ENCODE measurements at regions of chr15 and their contacts with region 1.

Region 1: GRCh38 chr15:41416742-41417406 is at the start of gene RTF1:
- DNase-seq: peak; percentile 88 to 99 (median 95)
- ATAC-seq: peak; percentile 95 to 98 (median 97)
- H3K4me3 ChIP-seq: peak within 1 kb of the TSS; percentile 91 to 96
- H3K4me3 Mint-ChIP-seq: peak within 1 kb of the TSS; percentile 94 to 96 (median 95)
- H3K27ac ChIP-seq: peak within 1 kb of the TSS; percentile 74
- H3K27ac Mint-ChIP-seq: peak within 1 kb of the TSS; percentile 91 to 97
- H3K4me1 ChIP-seq: peaks cover 13 to 32% of the 10 kb centered on the region in 2 experiments
- H3K4me1 Mint-ChIP-seq: peaks cover 40 to 45% (median 44%) of the 10 kb centered on the region in 3 donors
- H3K27me3 ChIP-seq: no peaks in the 10 kb centered on the region
- H3K27me3 Mint-ChIP-seq: no peaks in the 10 kb centered on the region
- total RNA-seq, gene RTF1: 30.6 to 45.9 (median 37.5) TPM

Region 2: DNA sequence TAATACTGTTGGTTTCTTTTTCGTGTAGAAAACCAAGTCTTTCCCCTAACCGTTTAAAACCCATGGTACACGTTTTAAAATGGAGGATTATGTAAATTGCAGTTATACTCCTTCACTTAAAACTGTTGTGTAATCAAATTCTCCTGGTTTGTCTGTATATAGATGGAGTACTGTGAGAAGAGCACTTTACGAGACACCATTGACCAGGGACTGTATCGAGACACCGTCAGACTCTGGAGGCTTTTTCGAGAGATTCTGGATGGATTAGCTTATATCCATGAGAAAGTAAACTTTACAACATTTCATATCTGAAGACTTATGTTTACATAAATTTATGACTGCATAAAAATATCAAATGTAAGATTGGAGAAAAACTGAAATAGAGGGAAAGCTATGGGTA is 1429.1 kb before region 1 on chr15:
- CTCF ChIA-PET with region 1: no interaction called
- POLR2A ChIA-PET with region 1: no interaction called
- DNase-seq: no peak
- ATAC-seq: no peak
- H3K4me3 ChIP-seq: no peak overlapping the region
- H3K4me3 Mint-ChIP-seq: no peak overlapping the region
- H3K27ac ChIP-seq: no peak overlapping the region
- H3K27ac Mint-ChIP-seq: no peak overlapping the region
- H3K4me1 ChIP-seq: no peaks in the 10 kb centered on the region
- H3K4me1 Mint-ChIP-seq: no peaks in the 10 kb centered on the region
- H3K27me3 ChIP-seq: no peaks in the 10 kb centered on the region
- H3K27me3 Mint-ChIP-seq: no peaks in the 10 kb centered on the region

Region 3: GRCh38 chr15:41438206-41438605 is 21.3 kb after region 1 on chr15:
- CTCF ChIA-PET with region 1: interaction called in 1 of 2 experiments, 5 read pairs
- POLR2A ChIA-PET with region 1: interaction called in 1 of 2 experiments, 11 read pairs
- DNase-seq: no peak
- ATAC-seq: no peak
- H3K4me3 ChIP-seq: no peak overlapping the region
- H3K4me3 Mint-ChIP-seq: no peak overlapping the region
- H3K27ac ChIP-seq: no peak overlapping the region
- H3K27ac Mint-ChIP-seq: peak overlapping the region in 1 of 2 donors; percentile 24
- H3K4me1 ChIP-seq: peaks cover 0 to 3% of the 10 kb centered on the region in 2 experiments
- H3K4me1 Mint-ChIP-seq: peaks cover 11 to 19% (median 15%) of the 10 kb centered on the region in 3 donors
- H3K27me3 ChIP-seq: no peaks in the 10 kb centered on the region
- H3K27me3 Mint-ChIP-seq: no peaks in the 10 kb centered on the region

Measured in T-cell (primary cell).